PC-3 (cell line): ENCODE measurements at regions of chr3 and their contacts with region 1.

Region 1: GRCh38 chr3:124845406-124845805 is 41.8 kb downstream of the ITGB5 start:
- DNase-seq: peak; percentile 87
- ATAC-seq: peak; percentile 97
- H3K4me3 ChIP-seq: no peak overlapping the region; the same call in 1 of the 2 replicates
- H3K27ac ChIP-seq: peak overlapping the region; percentile 86
- H3K4me1 ChIP-seq: peaks cover 19% of the 10 kb centered on the region
- H3K27me3 ChIP-seq: no peaks in the 10 kb centered on the region
- CTCF ChIP-seq: no peak

Region 2: GRCh38 chr3:124812291-124813265 is 32.8 kb before region 1 on chr3:
- CTCF ChIA-PET with region 1: no interaction called
- POLR2A ChIA-PET with region 1: no interaction called
- intact Hi-C with region 1: no loop called
- DNase-seq: peak; percentile 90
- ATAC-seq: peak; percentile 89
- H3K4me3 ChIP-seq: peak overlapping the region; percentile 27; the same call in 1 of the 2 replicates
- H3K27ac ChIP-seq: peak overlapping the region; percentile 82
- H3K4me1 ChIP-seq: peaks cover 51% of the 10 kb centered on the region
- H3K27me3 ChIP-seq: no peaks in the 10 kb centered on the region
- CTCF ChIP-seq: no peak

Region 3: GRCh38 chr3:124860599-124860998 is 15.2 kb after region 1 on chr3:
- CTCF ChIA-PET with region 1: no interaction called
- POLR2A ChIA-PET with region 1: interaction called, 3 read pairs
- intact Hi-C with region 1: loop called (anchors 1 kb)
- DNase-seq: peak; percentile 96
- ATAC-seq: peak; percentile 98
- H3K4me3 ChIP-seq: no peak overlapping the region
- H3K27ac ChIP-seq: peak overlapping the region; percentile 42
- H3K4me1 ChIP-seq: peaks cover 20% of the 10 kb centered on the region
- H3K27me3 ChIP-seq: no peaks in the 10 kb centered on the region
- CTCF ChIP-seq: no peak

Region 4: DNA sequence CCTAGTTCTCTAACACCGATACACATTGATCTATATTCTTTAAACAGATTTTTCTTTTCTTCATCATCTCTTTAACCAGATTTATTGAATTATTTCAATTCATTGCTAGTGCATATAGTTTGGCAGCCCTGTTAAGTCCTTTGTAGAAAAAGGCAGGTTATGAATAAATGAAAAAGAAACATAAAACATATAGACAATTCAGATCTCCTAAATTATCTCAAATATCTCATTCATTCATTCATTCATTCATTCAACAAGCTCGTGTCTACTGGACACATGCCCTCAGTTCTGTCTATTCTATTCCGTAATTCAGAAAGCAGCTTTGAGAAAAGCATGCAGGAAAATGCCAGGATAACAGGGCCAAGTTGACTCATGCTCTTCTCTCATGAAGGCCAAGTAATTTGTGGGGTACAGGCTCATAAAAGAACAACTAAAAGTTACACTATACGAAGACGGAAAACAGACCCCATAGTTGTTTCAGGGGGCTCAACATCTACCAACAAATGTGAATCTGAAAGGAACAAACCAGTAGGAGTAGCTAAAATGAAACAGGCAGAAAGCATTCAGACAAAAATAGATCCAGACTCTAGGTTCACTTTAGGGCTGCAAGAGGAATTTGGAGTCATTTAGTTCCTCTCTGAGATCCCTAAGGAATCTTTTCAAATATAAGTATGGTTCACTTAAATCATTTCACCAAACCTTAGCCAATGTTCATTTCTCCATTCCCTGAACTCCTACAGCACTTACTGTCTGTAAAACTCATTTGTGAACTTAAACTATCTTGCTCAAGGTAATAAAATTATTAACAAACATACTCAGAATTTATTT is 522.2 kb after region 1 on chr3:
- CTCF ChIA-PET with region 1: no interaction called
- POLR2A ChIA-PET with region 1: no interaction called
- intact Hi-C with region 1: no loop called
- DNase-seq: no peak
- ATAC-seq: no peak
- H3K4me3 ChIP-seq: no peak overlapping the region
- H3K27ac ChIP-seq: no peak overlapping the region
- H3K4me1 ChIP-seq: no peaks in the 10 kb centered on the region
- H3K27me3 ChIP-seq: no peaks in the 10 kb centered on the region
- CTCF ChIP-seq: no peak